ENCODE measurements at regions of chr17 and their contacts with region 1.

Region 1: GRCh38 chr17:58317421-58318064 is 11.1 kb downstream of the TSPOAP1 start:
- DNase-seq: peak; percentile 71

Region 2: DNA sequence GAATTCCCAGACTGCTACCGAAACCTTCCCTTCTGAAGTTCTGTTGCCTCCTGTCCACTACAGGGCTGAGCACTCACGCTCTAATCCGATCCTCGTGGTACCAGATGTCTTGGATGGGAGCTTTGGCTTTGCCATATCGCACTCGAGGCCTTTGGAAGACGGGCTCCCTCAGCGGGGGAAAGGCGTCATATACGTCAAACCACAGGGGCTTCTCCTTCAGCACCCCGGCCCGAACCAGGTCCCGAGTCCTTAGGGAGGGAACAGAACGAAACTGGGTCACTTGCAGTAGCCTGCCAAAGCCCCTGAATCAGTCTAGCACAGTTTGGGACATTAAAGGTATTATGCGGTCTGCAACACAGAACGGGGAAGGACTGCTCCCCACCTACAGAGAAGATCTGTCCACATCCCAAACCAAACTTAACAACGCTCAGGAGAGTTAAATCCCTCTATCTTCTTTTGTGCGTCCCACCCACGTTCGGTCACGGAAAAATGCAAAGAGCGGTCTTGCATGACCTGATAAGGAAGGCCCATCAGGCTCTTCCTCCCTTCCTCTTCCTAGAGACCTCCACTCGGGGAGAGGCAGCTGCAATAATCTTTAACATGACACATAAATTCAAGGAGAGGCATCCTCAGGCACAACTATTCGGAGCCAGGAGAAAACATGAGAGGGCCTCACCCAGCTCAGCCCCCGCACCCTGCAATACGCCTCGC is 468.2 kb before region 1 on chr17:
- intact Hi-C with region 1: no loop called
- DNase-seq: no peak

Region 3: DNA sequence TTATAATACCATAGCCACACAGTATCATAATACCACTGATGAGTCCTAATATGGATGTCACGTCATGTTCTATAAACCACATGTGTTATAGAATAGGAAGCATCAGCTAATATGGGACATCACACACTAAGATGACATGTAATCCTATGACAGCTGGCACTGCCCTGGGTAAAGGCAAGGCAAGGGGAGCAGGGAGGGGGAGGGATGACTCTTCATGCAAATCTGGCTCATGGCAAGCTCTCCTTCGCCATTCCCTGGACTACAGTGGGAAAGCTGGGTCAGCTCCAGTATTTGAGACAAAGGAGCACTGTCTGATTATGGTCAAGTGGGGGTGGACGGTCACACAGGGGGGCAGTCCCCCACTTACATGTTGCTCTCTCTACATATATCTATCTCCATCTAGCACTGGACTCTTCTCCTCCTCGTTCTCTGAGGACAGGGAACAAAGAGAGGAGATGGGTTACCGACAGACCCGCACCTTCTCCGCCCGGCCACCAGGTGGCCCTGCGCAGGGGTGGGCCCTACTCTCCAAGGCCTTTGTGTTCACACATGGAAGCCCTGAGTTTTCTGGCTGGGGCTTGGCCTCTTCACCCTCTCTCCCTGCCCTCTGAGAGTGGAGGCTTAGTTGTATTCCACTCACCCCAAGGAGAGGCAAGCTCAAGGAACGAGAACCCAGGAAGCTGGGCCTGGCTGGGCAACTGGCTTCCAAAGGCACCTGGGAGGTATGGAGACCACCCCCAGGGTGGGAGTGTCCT is 13.4 kb before region 1 on chr17:
- intact Hi-C with region 1: loop called in 1 of 2 experiments (anchors 1 kb)
- DNase-seq: peak; percentile 80

Measured in posterior vena cava (tissue), 2 donors.